Caco-2 (cell line): ENCODE measurements at regions of chr1 and their contacts with region 1.

Region 1: DNA sequence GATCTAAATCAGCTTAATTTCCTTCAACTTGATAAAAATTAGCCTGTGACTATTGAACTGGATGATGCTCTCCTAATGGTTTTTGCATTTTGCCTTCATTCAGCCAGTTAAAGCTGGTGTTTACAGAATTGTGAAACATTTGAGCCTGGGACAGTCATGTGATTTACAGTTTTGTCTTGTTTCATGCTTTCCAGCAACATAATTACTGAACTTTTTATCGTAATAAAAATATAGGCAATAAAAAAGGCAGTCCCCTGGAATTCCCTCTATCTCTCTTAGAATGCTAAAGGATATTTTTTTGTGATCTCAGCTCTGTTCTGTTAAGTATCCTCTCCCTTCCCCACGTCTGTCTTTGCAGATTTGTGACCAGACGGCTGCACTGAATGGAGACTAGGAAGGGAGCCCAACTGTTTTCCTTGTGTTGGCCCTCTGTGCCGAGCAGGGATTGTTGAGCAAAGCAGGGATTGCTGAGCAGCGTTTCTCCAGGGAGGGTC is 70.3 kb upstream of the RGL1 start:
- DNase-seq: peak; percentile 39 to 42
- H3K4me3 ChIP-seq: no peak overlapping the region
- H3K4me3 Mint-ChIP-seq: peak overlapping the region; percentile 25
- H3K27ac Mint-ChIP-seq: peak overlapping the region; percentile 68
- H3K4me1 ChIP-seq: peaks cover 82% of the 10 kb centered on the region
- H3K4me1 Mint-ChIP-seq: peaks cover 60% of the 10 kb centered on the region
- H3K27me3 ChIP-seq: no peaks in the 10 kb centered on the region
- H3K27me3 Mint-ChIP-seq: no peaks in the 10 kb centered on the region
- CTCF ChIP-seq: no peak

Region 2: GRCh38 chr1:183655562-183656075 is 79.0 kb before region 1 on chr1:
- CTCF ChIA-PET with region 1: no interaction called
- POLR2A ChIA-PET with region 1: no interaction called
- intact Hi-C with region 1: loop called (anchors 5 kb)
- DNase-seq: peak; percentile 80 to 86
- H3K4me3 ChIP-seq: no peak overlapping the region
- H3K4me3 Mint-ChIP-seq: no peak overlapping the region
- H3K27ac Mint-ChIP-seq: no peak overlapping the region
- H3K4me1 ChIP-seq: peaks cover 31% of the 10 kb centered on the region
- H3K4me1 Mint-ChIP-seq: peaks cover 41% of the 10 kb centered on the region
- H3K27me3 ChIP-seq: no peaks in the 10 kb centered on the region
- H3K27me3 Mint-ChIP-seq: no peaks in the 10 kb centered on the region
- CTCF ChIP-seq: peak; percentile 79 to 85

Region 3: GRCh38 chr1:183685112-183685713 is 49.4 kb before region 1 on chr1:
- CTCF ChIA-PET with region 1: no interaction called
- POLR2A ChIA-PET with region 1: no interaction called
- intact Hi-C with region 1: no loop called
- DNase-seq: peak in 1 of 2 experiments; percentile 64
- H3K4me3 ChIP-seq: no peak overlapping the region
- H3K4me3 Mint-ChIP-seq: no peak overlapping the region
- H3K27ac Mint-ChIP-seq: no peak overlapping the region
- H3K4me1 ChIP-seq: peaks cover 9% of the 10 kb centered on the region; the same call in 1 of the 2 replicates
- H3K4me1 Mint-ChIP-seq: peaks cover 13% of the 10 kb centered on the region
- H3K27me3 ChIP-seq: no peaks in the 10 kb centered on the region
- H3K27me3 Mint-ChIP-seq: no peaks in the 10 kb centered on the region
- CTCF ChIP-seq: peak; percentile 60 to 80

Region 4: DNA sequence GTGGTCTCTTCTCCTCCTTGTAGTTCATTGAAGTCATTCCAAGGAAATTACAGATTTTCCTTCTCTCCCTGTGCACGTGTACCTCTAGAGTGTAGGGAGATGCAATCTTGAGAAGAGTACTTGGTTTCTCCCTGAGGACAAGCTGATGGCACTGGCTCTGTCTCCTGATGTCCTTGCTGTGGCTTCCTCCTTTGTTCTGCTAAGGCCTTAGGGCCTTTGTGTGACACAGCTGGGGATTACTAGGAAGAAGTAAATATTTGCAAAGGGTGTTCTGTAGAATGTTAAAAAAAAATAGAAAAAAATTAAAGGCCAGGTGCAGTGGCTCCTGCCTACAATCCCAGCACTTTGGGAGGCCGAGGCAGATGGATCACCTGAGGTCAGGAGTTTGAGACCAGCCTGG is 15.3 kb before region 1 on chr1:
- CTCF ChIA-PET with region 1: interaction called, 3 read pairs
- POLR2A ChIA-PET with region 1: interaction called, 3 read pairs
- intact Hi-C with region 1: loop called (anchors 1 kb)
- DNase-seq: peak; percentile 77 to 84
- H3K4me3 ChIP-seq: no peak overlapping the region
- H3K4me3 Mint-ChIP-seq: peak overlapping the region; percentile 37
- H3K27ac Mint-ChIP-seq: no peak overlapping the region
- H3K4me1 ChIP-seq: peaks cover 37% of the 10 kb centered on the region
- H3K4me1 Mint-ChIP-seq: peaks cover 16% of the 10 kb centered on the region
- H3K27me3 ChIP-seq: no peaks in the 10 kb centered on the region
- H3K27me3 Mint-ChIP-seq: no peaks in the 10 kb centered on the region
- CTCF ChIP-seq: no peak

Region 5: DNA sequence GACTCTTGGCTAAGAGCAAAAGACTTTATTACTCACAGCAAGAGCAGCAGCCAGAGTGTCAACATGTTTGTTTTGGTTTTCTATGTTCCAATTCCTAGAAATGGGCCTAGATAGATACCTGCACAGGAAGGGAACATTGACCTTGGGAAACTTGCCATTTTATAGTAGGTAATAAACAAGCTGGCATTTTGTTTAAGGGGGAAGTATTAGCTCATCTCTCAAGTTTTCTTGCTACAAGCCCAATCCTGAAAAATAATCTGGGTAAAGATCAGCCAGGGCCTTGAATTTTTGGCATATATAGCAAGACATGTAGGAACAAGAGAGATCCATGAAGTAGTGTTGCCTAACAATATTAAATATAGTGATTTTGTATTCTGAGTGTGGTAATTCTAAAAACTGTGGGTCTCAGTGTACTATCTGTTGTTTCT is 18.9 kb after region 1 on chr1:
- CTCF ChIA-PET with region 1: no interaction called
- POLR2A ChIA-PET with region 1: no interaction called
- intact Hi-C with region 1: no loop called
- DNase-seq: no peak
- H3K4me3 ChIP-seq: no peak overlapping the region
- H3K4me3 Mint-ChIP-seq: no peak overlapping the region
- H3K27ac Mint-ChIP-seq: no peak overlapping the region
- H3K4me1 ChIP-seq: peaks cover 12% of the 10 kb centered on the region; the same call in 1 of the 2 replicates
- H3K4me1 Mint-ChIP-seq: peaks cover 13% of the 10 kb centered on the region
- H3K27me3 ChIP-seq: no peaks in the 10 kb centered on the region
- H3K27me3 Mint-ChIP-seq: no peaks in the 10 kb centered on the region
- CTCF ChIP-seq: no peak

Region 6: DNA sequence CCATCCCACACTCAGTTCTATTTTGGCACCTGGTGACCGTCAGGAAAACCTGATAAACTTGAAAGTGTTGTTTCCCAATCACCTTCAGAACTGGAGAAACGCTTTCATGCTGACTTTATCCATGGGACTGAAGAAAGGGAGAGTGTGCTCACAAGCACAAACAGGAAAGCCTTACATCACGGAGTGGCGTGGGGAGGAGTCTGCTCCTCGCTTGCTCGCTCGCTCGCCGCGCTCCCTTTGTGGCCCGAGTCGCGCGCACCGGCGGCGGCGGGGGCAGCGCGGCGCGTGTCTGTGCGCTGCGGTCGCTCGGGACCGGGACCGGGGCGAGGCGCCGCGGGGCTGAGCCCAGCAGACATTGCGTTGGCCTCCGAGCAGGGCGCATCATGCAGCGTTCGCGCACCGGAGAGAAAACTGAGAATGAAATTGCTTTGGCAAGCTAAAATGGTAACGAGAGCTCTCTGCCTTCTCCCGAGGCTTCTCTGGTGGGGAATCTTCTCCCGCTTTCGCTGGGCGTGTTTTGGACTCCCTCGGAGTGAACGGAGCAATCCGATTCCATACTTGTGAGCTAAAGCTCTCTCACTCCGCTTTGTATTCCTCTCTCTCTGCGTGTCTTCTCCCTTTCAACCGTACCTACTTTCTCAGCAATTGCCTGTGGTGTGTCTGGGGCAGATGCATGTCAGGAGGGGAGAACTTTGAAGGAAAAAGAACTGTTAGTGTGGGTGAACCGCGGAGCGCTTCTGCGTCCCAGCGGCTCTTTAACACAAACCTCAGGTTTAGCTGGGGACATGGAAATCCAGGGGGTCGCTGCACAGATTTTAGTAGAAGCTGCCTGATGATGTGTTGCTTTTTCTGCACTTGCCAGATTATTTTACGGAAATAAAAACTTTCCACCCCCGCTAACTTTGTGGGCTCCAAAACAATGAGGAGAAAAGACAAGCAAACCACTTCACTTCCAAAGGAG is 70.6 kb after region 1 on chr1 and contains the start of gene RGL1:
- CTCF ChIA-PET with region 1: no interaction called
- POLR2A ChIA-PET with region 1: interaction called, 3 read pairs
- intact Hi-C with region 1: loop called (anchors 2 kb)
- DNase-seq: peak; percentile 81 to 85
- H3K4me3 ChIP-seq: peak within 1 kb of the TSS; percentile 74
- H3K4me3 Mint-ChIP-seq: peak within 1 kb of the TSS; percentile 99
- H3K27ac Mint-ChIP-seq: peak within 1 kb of the TSS; percentile 95
- H3K4me1 ChIP-seq: peaks cover 36% of the 10 kb centered on the region
- H3K4me1 Mint-ChIP-seq: peaks cover 28% of the 10 kb centered on the region
- H3K27me3 ChIP-seq: no peaks in the 10 kb centered on the region
- H3K27me3 Mint-ChIP-seq: no peaks in the 10 kb centered on the region
- CTCF ChIP-seq: no peak
- total RNA-seq, gene RGL1: 33.8 and 34.5 TPM in 2 replicates